ENCODE measurements at regions of chr7 and their contacts with region 1.

Region 1: GRCh38 chr7:22001345-22002004 is 55.8 kb upstream of the CDCA7L start:
- DNase-seq: peak in 2 of 5 donors; percentile 71 to 81
- H3K4me3 ChIP-seq: no peak overlapping the region
- H3K27ac ChIP-seq: no peak overlapping the region
- H3K4me1 ChIP-seq: no peaks in the 10 kb centered on the region
- H3K27me3 ChIP-seq: no peaks in the 10 kb centered on the region
- CTCF ChIP-seq: peak; percentile 71

Region 2: GRCh38 chr7:21261627-21262594 is 739.6 kb before region 1 on chr7:
- intact Hi-C with region 1: loop called (anchors 5 kb)
- DNase-seq: peak in 4 of 5 donors; percentile 45 to 51 (median 49)
- H3K4me3 ChIP-seq: no peak overlapping the region
- H3K27ac ChIP-seq: no peak overlapping the region
- H3K4me1 ChIP-seq: no peaks in the 10 kb centered on the region
- H3K27me3 ChIP-seq: no peaks in the 10 kb centered on the region
- CTCF ChIP-seq: peak; percentile 24

Region 3: DNA sequence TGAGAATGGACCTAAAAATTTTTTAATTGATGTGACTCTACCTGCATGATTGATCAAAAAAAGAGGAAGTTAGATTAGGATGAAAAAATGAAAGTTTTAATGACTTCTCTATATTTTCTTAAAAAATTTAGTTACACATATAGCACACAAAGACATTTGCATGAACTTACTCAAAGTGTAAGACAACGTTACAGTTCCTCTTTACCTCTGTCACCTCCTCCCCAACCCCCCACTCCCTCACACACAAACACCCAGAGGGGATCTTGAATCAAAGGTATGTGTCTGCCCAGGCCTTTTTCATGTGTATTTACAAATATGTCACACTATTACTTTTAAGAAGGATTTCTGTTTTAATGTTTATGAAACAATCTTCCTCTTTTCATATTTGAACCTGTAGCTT is 35.2 kb before region 1 on chr7:
- intact Hi-C with region 1: no loop called
- DNase-seq: no peak
- H3K4me3 ChIP-seq: no peak overlapping the region
- H3K27ac ChIP-seq: no peak overlapping the region
- H3K4me1 ChIP-seq: no peaks in the 10 kb centered on the region
- H3K27me3 ChIP-seq: no peaks in the 10 kb centered on the region
- CTCF ChIP-seq: no peak

Region 4: GRCh38 chr7:22193450-22193983 is 192.0 kb after region 1 on chr7:
- intact Hi-C with region 1: no loop called
- DNase-seq: peak; percentile 63 to 87 (median 72)
- H3K4me3 ChIP-seq: peak overlapping the region in 1 of 3 donors; percentile 61
- H3K27ac ChIP-seq: no peak overlapping the region
- H3K4me1 ChIP-seq: peaks cover 2 to 3% (median 3%) of the 10 kb centered on the region in 3 donors
- H3K27me3 ChIP-seq: no peaks in the 10 kb centered on the region
- CTCF ChIP-seq: no peak